ENCODE measurements at regions of chr13 and their contacts with region 1.

Region 1: DNA sequence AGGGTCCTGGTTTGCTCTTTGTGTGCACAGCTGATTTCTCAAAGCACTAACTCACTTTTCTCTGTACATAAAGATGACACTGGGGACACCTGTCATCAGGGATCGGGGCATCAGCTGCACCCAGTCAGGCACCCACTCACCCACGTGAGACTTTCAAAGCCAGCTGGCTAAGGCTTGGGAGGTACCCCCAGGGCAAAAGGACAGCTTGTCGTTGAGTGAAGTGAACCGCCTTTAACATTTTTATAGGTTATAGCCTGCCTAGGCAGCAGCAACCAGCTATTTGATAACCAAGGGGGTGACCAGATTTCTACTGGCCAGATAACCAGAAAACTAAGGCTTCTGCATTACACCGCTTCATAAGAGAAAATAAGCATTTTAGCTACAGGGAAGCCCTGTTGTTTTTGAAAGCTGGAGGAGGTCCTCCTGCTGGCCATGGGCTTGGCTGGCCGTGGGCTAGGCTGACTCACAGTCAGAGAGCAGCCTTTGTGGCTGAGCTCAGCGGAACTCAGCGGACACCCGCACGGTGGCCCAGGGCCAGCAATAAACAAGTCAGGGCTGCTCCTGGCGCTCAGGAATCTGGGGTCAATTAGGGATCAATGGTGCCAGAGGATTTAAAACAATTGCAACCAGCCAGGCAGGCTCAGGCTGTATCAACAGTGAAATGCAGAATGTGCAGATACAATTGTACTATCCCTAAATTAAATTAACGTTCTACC is 57.1 kb downstream of the ALOX5AP start:
- DNase-seq: peak; percentile 92
- H3K4me3 Mint-ChIP-seq: no peak overlapping the region
- H3K27ac Mint-ChIP-seq: no peak overlapping the region
- H3K4me1 Mint-ChIP-seq: peaks cover 22% of the 10 kb centered on the region
- H3K27me3 Mint-ChIP-seq: no peaks in the 10 kb centered on the region
- CTCF ChIP-seq: peak; percentile 42

Region 2: GRCh38 chr13:30690282-30691188 is 101.9 kb before region 1 on chr13:
- CTCF ChIA-PET with region 1: interaction called, 8 read pairs
- POLR2A ChIA-PET with region 1: interaction called, 16 read pairs
- intact Hi-C with region 1: loop called (anchors 5 kb)
- DNase-seq: peak; percentile 75
- H3K4me3 Mint-ChIP-seq: peak overlapping the region; percentile 79
- H3K27ac Mint-ChIP-seq: peak overlapping the region; percentile 93
- H3K4me1 Mint-ChIP-seq: peaks cover 6% of the 10 kb centered on the region
- H3K27me3 Mint-ChIP-seq: no peaks in the 10 kb centered on the region
- CTCF ChIP-seq: no peak